HEK293T (cell line): ENCODE measurements at regions of chr14 and their contacts with region 1.

Region 1: DNA sequence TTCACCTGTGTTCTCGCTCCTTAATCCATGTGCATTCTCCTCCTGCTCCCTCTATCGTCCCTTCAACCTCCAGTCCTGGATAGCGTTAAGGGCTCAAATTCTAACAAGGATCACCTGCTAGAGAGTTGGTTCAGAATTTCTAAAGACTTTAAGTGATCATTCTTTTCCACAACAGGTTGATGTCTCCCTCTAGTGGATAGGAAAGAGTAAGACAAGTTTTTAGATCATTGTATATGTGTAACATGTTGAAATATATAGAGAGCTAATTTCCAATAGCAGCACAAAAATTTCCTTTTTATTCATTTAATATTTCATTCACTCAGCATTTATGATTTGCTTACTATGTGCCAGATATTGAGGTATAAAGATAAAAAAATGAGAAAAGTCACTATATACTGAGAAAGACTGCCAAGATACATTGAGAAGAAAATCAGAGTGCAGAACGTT is 9.3 kb upstream of the ESR2 start:
- DNase-seq: peak; percentile 61

Region 2: GRCh38 chr14:64005822-64006221 is 297.7 kb before region 1 on chr14:
- CTCF ChIA-PET with region 1: interaction called, 15 read pairs
- POLR2A ChIA-PET with region 1: no interaction called
- DNase-seq: no peak